Heart right ventricle (tissue), 16 donors: ENCODE measurements at regions of chr2 and their contacts with region 1.

Region 1: GRCh38 chr2:153589586-153589985 is 111.0 kb upstream of the RPRM start:
- DNase-seq: no peak
- ATAC-seq: no peak
- H3K4me3 ChIP-seq: no peak overlapping the region
- H3K27ac ChIP-seq: no peak overlapping the region
- H3K4me1 ChIP-seq: no peaks in the 10 kb centered on the region
- H3K27me3 ChIP-seq: no peaks in the 10 kb centered on the region
- CTCF ChIP-seq: no peak

Region 2: GRCh38 chr2:153068915-153069691 is 520.5 kb before region 1 on chr2:
- intact Hi-C with region 1: no loop called
- DNase-seq: no peak
- ATAC-seq: no peak
- H3K4me3 ChIP-seq: no peak overlapping the region
- H3K27ac ChIP-seq: no peak overlapping the region
- H3K4me1 ChIP-seq: no peaks in the 10 kb centered on the region
- H3K27me3 ChIP-seq: no peaks in the 10 kb centered on the region
- CTCF ChIP-seq: no peak

Region 3: DNA sequence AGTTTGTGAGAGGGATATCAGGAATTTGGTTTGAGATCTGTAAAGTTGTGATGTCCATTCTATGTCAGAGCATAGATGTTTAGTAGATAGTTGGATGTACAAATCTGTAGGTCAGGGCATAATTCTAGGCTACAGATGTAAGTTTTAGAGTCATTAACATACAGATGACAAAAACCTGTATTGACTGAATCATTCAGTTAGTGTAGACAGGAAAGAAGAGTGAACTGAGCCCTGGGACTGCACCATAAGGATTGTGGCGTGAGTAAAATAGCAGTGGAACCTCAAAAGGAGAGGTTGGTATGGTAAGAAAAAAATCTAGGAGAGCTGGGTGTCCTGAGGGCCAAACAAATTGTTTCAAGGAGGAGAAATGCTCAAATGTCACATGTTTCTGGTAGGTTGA is 37.9 kb before region 1 on chr2:
- intact Hi-C with region 1: loop called in 1 of 10 experiments (anchors 1 kb)
- DNase-seq: no peak
- ATAC-seq: no peak
- H3K4me3 ChIP-seq: no peak overlapping the region
- H3K27ac ChIP-seq: no peak overlapping the region
- H3K4me1 ChIP-seq: no peaks in the 10 kb centered on the region
- H3K27me3 ChIP-seq: no peaks in the 10 kb centered on the region
- CTCF ChIP-seq: no peak

Region 4: GRCh38 chr2:153739394-153739793 is 149.8 kb after region 1 on chr2:
- intact Hi-C with region 1: no loop called
- DNase-seq: no peak
- ATAC-seq: no peak
- H3K4me3 ChIP-seq: no peak overlapping the region
- H3K27ac ChIP-seq: no peak overlapping the region
- H3K4me1 ChIP-seq: no peaks in the 10 kb centered on the region
- H3K27me3 ChIP-seq: no peaks in the 10 kb centered on the region
- CTCF ChIP-seq: no peak